Natural killer cell (primary cell): ENCODE measurements at regions of chr17 and their contacts with region 1.

Region 1: GRCh38 chr17:35242805-35243560 is at the start of gene SLFN5:
- DNase-seq: peak; percentile 96 to 97
- ATAC-seq: peak; percentile 65 to 86 (median 77)
- H3K4me3 ChIP-seq: peak within 1 kb of the TSS; percentile 78
- H3K4me3 Mint-ChIP-seq: peak within 1 kb of the TSS; percentile 97
- H3K27ac ChIP-seq: peak within 1 kb of the TSS; percentile 98
- H3K27ac Mint-ChIP-seq: peak within 1 kb of the TSS; percentile 97 to 100
- H3K4me1 ChIP-seq: peaks cover 52% of the 10 kb centered on the region
- H3K4me1 Mint-ChIP-seq: peaks cover 73 to 76% of the 10 kb centered on the region in 2 donors
- H3K27me3 ChIP-seq: no peaks in the 10 kb centered on the region
- H3K27me3 Mint-ChIP-seq: no peaks in the 10 kb centered on the region
- CTCF ChIP-seq: no peak
- total RNA-seq, gene SLFN5: 118 to 164 (median 141) TPM

Region 2: DNA sequence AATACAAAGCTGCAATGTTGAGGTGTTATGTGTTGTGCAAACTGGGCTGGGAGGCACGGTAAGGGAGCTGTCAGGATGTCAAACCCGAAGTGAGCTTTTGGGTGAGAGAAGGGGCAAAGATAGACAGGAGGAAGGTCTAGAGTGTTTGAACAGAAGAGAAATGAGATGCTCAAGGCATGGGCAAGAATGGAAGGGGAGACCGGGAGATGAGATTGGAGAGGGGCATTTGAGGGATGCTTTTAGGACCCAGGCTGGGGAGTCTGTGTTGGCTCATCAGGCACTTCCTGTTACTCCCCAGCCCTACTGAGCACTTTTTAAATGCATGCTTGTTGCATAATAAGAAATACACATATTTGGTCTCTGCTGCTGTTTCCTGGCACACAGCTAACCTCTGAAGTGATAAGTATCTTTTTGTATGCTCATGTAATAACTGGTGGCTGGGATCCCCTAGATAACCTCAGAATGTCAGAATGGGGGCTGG is 81.7 kb before region 1 on chr17:
- intact Hi-C with region 1: loop called (anchors 1 kb)
- DNase-seq: peak; percentile 37 to 74
- ATAC-seq: peak; percentile 69 to 81 (median 77)
- H3K4me3 ChIP-seq: peak overlapping the region; percentile 14
- H3K4me3 Mint-ChIP-seq: peak overlapping the region; percentile 79
- H3K27ac ChIP-seq: peak overlapping the region; percentile 85
- H3K27ac Mint-ChIP-seq: peak overlapping the region; percentile 84 to 87
- H3K4me1 ChIP-seq: peaks cover 40% of the 10 kb centered on the region
- H3K4me1 Mint-ChIP-seq: peaks cover 37 to 43% of the 10 kb centered on the region in 2 donors
- H3K27me3 ChIP-seq: no peaks in the 10 kb centered on the region
- H3K27me3 Mint-ChIP-seq: no peaks in the 10 kb centered on the region
- CTCF ChIP-seq: no peak

Region 3: DNA sequence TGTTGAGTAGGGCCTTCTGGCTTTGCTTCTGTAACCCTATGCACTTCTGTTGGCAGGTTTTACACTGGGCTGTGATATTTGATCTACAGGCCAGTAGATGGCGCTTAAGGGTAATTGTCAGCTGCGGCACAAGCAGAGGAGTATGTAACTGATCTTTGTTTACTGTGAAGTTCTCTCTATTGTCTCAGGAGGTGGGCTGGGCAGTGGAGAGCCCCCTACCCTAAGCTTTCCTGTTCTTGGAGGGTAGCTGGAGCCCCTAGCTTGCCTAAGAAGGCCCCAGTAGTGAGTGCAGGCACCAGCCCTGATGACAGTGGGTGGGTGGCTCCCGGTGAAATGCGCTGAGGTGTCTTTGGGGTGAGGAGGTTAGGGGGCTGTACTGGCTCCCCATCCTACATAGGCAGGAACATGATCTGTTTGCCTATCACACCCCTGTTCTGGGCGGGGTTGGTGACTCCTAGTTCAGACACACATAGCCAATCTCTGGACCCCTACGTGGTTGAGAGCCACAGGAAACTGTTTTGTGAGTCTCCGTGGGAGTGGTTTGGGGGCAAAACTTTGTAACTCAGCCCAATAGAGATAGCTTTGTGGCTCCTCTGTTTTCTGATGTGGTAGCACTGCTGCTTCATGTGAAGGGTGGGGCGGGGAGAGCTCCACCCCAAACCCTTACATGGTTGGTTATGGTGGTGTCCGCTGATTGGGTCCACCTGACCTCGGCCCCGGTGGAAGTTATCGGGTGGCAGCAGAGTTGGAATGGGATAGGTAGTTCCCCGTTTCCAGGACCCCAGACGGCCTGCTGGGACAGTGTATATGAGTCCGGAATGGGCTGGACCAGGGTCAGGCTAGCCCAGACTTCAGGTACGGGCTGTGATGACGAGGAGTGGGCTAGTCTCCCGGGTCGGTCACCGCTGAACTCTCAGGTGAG is 70.1 kb after region 1 on chr17:
- intact Hi-C with region 1: loop called (anchors 1 kb)
- DNase-seq: peak; percentile 83 to 96
- ATAC-seq: peak; percentile 87 to 95 (median 89)
- H3K4me3 ChIP-seq: peak overlapping the region; percentile 73
- H3K4me3 Mint-ChIP-seq: peak overlapping the region; percentile 99
- H3K27ac ChIP-seq: peak overlapping the region; percentile 90
- H3K27ac Mint-ChIP-seq: peak overlapping the region; percentile 99 to 100
- H3K4me1 ChIP-seq: peaks cover 22% of the 10 kb centered on the region
- H3K4me1 Mint-ChIP-seq: peaks cover 47 to 55% of the 10 kb centered on the region in 2 donors
- H3K27me3 ChIP-seq: no peaks in the 10 kb centered on the region
- H3K27me3 Mint-ChIP-seq: no peaks in the 10 kb centered on the region
- CTCF ChIP-seq: peak; percentile 93

Region 4: DNA sequence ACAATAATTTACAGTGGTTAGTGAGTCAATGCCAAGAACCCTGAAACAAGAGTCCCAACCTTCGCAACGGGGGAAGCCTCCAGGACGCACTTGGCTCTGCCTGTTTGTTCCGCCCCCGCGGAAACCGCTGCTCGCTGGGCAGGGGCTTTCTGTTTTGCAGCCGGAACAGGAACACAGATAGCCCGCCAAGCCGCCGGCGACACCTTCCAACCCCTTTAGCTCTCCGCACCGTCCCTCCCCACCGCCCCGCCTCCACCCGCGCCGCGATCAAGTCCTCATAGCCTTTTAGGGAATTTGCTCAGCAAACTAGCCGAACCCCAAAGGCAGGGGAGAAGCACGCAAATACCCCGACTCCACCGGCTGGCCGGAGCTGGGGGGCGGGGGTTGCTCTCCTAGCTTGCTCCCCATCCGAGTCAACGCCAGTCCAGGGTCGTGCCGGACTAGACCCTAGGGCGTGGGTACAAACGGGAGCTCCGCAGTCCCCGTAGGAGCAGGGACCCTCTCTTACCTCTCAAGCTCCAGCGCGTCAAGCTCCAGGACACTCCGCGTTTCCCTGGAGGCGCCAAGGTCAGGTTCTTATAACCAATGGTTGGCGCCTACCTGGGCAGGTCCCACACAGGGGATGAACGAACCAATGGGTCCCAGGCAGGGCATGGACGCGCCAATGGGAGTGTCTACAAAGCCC is 205.4 kb after region 1 on chr17 and contains the start of gene SLFN13:
- intact Hi-C with region 1: loop called (anchors 1 kb)
- DNase-seq: peak; percentile 80 to 91
- ATAC-seq: peak; percentile 79 to 91 (median 86)
- H3K4me3 ChIP-seq: peak within 1 kb of the TSS; percentile 91
- H3K4me3 Mint-ChIP-seq: peak within 1 kb of the TSS; percentile 98
- H3K27ac ChIP-seq: peak within 1 kb of the TSS; percentile 97
- H3K27ac Mint-ChIP-seq: peak within 1 kb of the TSS; percentile 96 to 98
- H3K4me1 ChIP-seq: peaks cover 28% of the 10 kb centered on the region
- H3K4me1 Mint-ChIP-seq: peaks cover 44 to 46% of the 10 kb centered on the region in 2 donors
- H3K27me3 ChIP-seq: no peaks in the 10 kb centered on the region
- H3K27me3 Mint-ChIP-seq: no peaks in the 10 kb centered on the region
- CTCF ChIP-seq: no peak
- total RNA-seq, gene SLFN13: 85.9 to 182 (median 129) TPM

Region 5: DNA sequence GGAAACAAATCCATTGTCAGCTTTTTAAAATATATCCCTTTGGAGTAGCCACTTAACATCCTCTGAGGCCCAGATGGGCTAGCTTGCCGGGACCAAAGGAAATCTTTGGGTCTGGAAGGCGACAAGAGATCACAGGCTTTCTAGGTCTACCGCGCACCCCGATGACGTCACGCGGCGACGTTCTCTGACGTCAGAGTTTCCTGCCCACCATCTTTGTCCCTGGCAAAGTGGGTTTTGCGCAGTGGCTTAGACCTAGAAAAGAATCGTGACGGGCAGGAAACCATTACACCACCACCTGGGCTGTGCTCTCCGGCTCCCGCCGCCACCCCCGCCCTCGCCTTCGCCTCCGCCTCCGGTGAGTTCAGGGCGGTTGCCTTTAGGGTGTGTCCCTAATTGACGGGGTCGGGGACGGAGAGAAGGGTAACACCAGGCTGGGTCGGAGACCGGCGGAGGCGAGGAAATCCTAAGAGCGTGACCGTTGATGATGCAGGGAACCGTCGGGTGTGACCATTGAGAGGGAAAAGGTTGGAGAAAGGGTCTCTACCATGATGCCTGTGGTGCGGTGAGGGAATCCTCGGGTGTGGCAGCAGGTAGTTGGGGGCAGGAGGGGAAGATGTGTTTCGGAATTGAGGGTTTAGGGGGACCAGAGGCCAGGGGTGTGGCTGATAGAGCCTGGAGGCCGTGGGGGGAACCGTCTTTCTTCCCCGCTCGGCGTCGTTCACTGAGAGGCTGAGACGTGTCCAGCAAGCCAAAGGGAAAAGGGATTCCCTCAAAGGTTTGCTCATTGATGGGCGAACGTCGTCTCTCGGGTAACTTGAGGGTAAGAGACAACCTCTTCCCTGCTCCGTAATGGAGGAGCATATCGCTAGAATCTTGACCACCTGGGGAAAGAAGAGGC is 344.3 kb after region 1 on chr17 and contains the start of gene AP2B1:
- intact Hi-C with region 1: loop called (anchors 1 kb)
- DNase-seq: peak; percentile 99
- ATAC-seq: peak; percentile 94 to 98 (median 98)
- H3K4me3 ChIP-seq: peak within 1 kb of the TSS; percentile 70
- H3K4me3 Mint-ChIP-seq: peak within 1 kb of the TSS; percentile 94
- H3K27ac ChIP-seq: peak within 1 kb of the TSS; percentile 88
- H3K27ac Mint-ChIP-seq: peak within 1 kb of the TSS; percentile 94 to 100
- H3K4me1 ChIP-seq: peaks cover 13% of the 10 kb centered on the region
- H3K4me1 Mint-ChIP-seq: peaks cover 28 to 33% of the 10 kb centered on the region in 2 donors
- H3K27me3 ChIP-seq: no peaks in the 10 kb centered on the region
- H3K27me3 Mint-ChIP-seq: peaks cover 0 to 9% of the 10 kb centered on the region in 2 donors
- CTCF ChIP-seq: no peak
- total RNA-seq, gene AP2B1: 111 to 148 (median 139) TPM

Region 6: DNA sequence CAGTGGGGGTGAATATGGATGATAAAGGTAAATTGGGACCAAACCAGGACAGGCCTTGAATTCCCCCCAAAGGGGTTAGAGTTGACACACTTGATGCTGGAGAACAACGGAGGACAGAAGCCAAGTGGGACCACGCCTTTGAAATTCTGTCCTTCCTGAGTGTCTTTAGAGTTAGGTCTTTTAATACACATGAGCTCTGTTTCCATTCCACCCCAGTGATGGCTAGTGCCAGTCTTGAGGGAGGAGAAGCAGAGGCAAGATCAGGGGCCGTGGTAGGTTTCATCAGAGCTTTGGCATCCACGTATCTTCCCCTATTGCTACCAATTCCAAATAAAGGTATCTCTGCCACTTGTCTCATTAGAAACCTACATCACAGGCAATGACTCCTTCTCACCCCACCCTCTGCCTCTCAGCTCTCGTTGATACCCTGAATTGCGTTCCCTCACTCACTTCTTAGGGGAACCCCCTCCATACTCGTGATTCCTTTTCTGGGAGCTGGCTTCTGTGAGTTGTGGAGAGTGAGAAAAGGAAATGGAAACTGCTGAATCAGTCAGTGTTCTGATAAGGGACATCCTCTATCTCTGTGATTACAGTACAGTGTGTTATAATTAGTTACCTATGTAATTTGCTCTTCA is 956.0 kb after region 1 on chr17:
- intact Hi-C with region 1: loop called (anchors 5 kb)
- DNase-seq: peak; percentile 59 to 80
- ATAC-seq: peak; percentile 36 to 61 (median 57)
- H3K4me3 ChIP-seq: no peak overlapping the region
- H3K4me3 Mint-ChIP-seq: peak overlapping the region; percentile 63
- H3K27ac ChIP-seq: no peak overlapping the region
- H3K27ac Mint-ChIP-seq: peak overlapping the region; percentile 89 to 95
- H3K4me1 ChIP-seq: peaks cover 72% of the 10 kb centered on the region
- H3K4me1 Mint-ChIP-seq: peaks cover 81 to 84% of the 10 kb centered on the region in 2 donors
- H3K27me3 ChIP-seq: no peaks in the 10 kb centered on the region
- H3K27me3 Mint-ChIP-seq: no peaks in the 10 kb centered on the region
- CTCF ChIP-seq: no peak